ENCODE measurements at regions of chr12 and their contacts with region 1.

Region 1: GRCh38 chr12:109110988-109111495 is 5.3 kb upstream of the ACACB start:
- DNase-seq: peak; percentile 42
- ATAC-seq: peak; percentile 75
- H3K4me3 ChIP-seq: peak overlapping the region; percentile 61
- H3K27ac ChIP-seq: peak overlapping the region; percentile 41; the same call in 1 of the 2 replicates
- H3K4me1 ChIP-seq: no peaks in the 10 kb centered on the region
- H3K27me3 ChIP-seq: no peaks in the 10 kb centered on the region
- CTCF ChIP-seq: no peak

Region 2: DNA sequence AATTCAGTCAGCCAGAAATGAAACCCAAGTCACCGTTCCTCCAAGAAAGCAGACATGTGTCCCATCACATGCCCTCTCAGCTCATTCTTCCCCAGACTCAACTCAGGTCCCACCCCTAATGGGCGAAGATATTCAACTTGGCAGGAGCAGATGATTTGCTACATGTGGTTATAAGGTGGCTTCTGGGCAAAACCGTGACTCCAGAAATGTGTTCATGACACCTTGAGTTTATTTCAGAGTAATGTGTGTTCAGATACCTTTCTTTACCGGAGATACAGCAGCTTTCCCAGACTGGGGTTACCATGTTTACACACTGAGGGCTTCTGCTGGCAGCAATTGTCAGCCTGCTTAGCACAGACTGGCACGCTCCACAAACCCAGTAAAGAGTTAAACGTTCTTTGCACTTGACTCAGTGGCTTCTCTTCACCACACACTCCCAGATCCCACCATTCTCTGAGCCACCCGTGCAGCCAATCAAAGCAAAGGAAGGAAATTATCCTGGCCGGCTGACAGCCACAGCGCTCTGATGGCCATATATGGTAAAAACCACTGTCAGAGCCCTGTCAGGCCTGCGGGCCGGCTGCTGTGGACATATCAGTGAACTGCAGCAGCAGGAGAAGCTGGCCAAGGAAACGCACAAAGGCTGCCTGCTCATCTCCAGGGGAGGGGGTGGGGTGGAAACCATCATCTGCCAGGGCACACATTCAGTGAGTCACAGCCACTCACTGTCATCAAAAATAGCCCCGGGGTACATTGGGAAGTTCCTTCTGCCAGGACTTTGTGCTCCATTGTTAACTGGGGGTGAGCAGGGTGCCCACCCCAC is 419.7 kb before region 1 on chr12:
- CTCF ChIA-PET with region 1: no interaction called
- POLR2A ChIA-PET with region 1: no interaction called
- intact Hi-C with region 1: no loop called
- DNase-seq: peak; percentile 100
- ATAC-seq: peak; percentile 90
- H3K4me3 ChIP-seq: peak overlapping the region; percentile 58
- H3K27ac ChIP-seq: peak overlapping the region; percentile 89
- H3K4me1 ChIP-seq: peaks cover 68% of the 10 kb centered on the region
- H3K27me3 ChIP-seq: no peaks in the 10 kb centered on the region
- CTCF ChIP-seq: 0 out of 2 replicates have a peak, but pooled peaks have one; percentile 14

Region 3: GRCh38 chr12:109134186-109134917 is 23.3 kb after region 1 on chr12:
- CTCF ChIA-PET with region 1: interaction called, 10 read pairs
- POLR2A ChIA-PET with region 1: no interaction called
- intact Hi-C with region 1: no loop called
- DNase-seq: peak; percentile 63
- ATAC-seq: peak; percentile 92
- H3K4me3 ChIP-seq: no peak overlapping the region
- H3K27ac ChIP-seq: no peak overlapping the region
- H3K4me1 ChIP-seq: no peaks in the 10 kb centered on the region
- H3K27me3 ChIP-seq: no peaks in the 10 kb centered on the region
- CTCF ChIP-seq: peak; percentile 94

Region 4: GRCh38 chr12:109154451-109155438 is 43.7 kb after region 1 on chr12:
- CTCF ChIA-PET with region 1: interaction called, 3 read pairs
- POLR2A ChIA-PET with region 1: no interaction called
- intact Hi-C with region 1: loop called (anchors 5 kb)
- DNase-seq: peak; percentile 94
- ATAC-seq: peak; percentile 89
- H3K4me3 ChIP-seq: peak overlapping the region; percentile 89
- H3K27ac ChIP-seq: peak overlapping the region; percentile 47
- H3K4me1 ChIP-seq: peaks cover 12% of the 10 kb centered on the region
- H3K27me3 ChIP-seq: no peaks in the 10 kb centered on the region
- CTCF ChIP-seq: no peak

Region 5: GRCh38 chr12:109165599-109165998 is 54.6 kb after region 1 on chr12:
- CTCF ChIA-PET with region 1: no interaction called
- POLR2A ChIA-PET with region 1: no interaction called
- intact Hi-C with region 1: loop called (anchors 5 kb)
- DNase-seq: no peak
- ATAC-seq: peak; percentile 55
- H3K4me3 ChIP-seq: no peak overlapping the region
- H3K27ac ChIP-seq: no peak overlapping the region
- H3K4me1 ChIP-seq: peaks cover 12% of the 10 kb centered on the region
- H3K27me3 ChIP-seq: no peaks in the 10 kb centered on the region
- CTCF ChIP-seq: no peak

Region 6: DNA sequence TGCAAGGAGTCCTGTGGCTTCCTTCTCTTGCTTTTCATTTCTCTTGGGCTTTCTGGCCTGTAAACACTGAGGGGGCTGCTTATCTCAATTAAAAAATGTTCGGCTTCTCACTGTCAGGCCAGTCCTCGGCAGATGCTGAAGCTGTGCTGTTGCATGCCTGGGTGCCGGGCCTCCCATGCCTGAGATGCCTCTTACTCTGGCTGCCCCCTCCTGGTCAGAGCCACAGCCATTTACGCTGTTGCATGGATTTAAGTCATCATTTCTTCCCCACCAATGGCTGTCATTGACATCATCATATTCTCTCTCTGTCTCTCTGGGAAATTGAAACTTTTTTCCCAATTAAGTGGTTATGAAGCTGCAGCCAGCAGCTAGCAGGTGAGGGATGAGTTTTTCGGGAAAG is 144.3 kb after region 1 on chr12:
- CTCF ChIA-PET with region 1: no interaction called
- POLR2A ChIA-PET with region 1: interaction called, 3 read pairs
- intact Hi-C with region 1: loop called (anchors 1 kb)
- DNase-seq: peak; percentile 43
- ATAC-seq: peak; percentile 84
- H3K4me3 ChIP-seq: no peak overlapping the region
- H3K27ac ChIP-seq: no peak overlapping the region
- H3K4me1 ChIP-seq: no peaks in the 10 kb centered on the region
- H3K27me3 ChIP-seq: no peaks in the 10 kb centered on the region
- CTCF ChIP-seq: peak; percentile 60

Region 7: GRCh38 chr12:109358154-109358869 is 247.3 kb after region 1 on chr12:
- CTCF ChIA-PET with region 1: no interaction called
- POLR2A ChIA-PET with region 1: no interaction called
- intact Hi-C with region 1: no loop called
- DNase-seq: no peak
- ATAC-seq: no peak
- H3K4me3 ChIP-seq: no peak overlapping the region
- H3K27ac ChIP-seq: no peak overlapping the region
- H3K4me1 ChIP-seq: no peaks in the 10 kb centered on the region
- H3K27me3 ChIP-seq: peaks cover 98% of the 10 kb centered on the region
- CTCF ChIP-seq: no peak

Region 8: GRCh38 chr12:109393437-109394345 is 282.6 kb after region 1 on chr12:
- CTCF ChIA-PET with region 1: no interaction called
- POLR2A ChIA-PET with region 1: no interaction called
- intact Hi-C with region 1: no loop called
- DNase-seq: peak; percentile 85
- ATAC-seq: peak; percentile 91
- H3K4me3 ChIP-seq: no peak overlapping the region
- H3K27ac ChIP-seq: no peak overlapping the region
- H3K4me1 ChIP-seq: no peaks in the 10 kb centered on the region
- H3K27me3 ChIP-seq: 0 out of 2 replicates have a peak, but pooled peaks cover 5% of the 10 kb centered on the region
- CTCF ChIP-seq: peak; percentile 97

Measured in PC-3 (cell line).